Activated CD8-positive, alpha-beta T cell treated with anti-CD3 and anti-CD28 coated beads for 36 hours (primary cell): ENCODE measurements at regions of chr17 and their contacts with region 1.

Region 1: DNA sequence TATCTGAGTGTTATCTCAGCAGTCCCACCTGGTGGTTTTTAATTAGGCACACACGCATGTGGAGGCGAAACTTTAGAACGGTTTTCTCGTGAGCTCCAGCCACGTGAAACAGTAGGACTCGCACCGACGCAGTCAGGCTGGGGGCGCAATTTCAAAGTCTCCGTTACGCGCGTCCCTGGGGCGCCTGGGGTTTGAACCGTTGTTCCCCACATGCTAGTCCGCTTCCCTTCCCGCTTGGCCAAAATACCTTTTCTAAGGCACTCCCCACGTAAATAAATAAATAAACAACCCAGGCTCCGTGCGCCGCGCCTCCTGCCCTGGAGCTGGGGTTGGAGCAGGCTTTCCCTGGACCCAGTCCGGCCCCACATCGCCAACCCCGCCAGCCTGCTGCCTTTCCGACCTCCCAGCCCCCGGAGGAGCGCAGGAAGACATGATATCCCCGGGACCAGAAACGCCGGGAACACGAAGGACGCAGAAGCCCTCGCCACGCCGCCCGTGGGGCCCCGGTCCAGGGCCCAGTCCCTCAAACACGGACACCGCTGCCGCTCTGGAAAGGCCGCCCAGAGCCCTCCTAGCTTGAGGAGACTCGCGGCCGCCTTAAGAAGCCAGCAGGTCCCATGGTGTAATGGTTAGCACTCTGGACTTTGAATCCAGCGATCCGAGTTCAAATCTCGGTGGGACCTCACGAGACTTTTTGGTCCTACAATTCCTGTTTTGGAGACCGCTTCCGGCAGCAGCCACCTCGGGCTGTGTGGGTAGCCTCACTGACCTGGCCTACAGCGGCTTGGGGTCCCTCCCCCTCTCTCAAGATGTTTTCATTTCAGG is 18.2 kb downstream of the GNGT2 start:
- DNase-seq: peak; percentile 92
- ATAC-seq: peak; percentile 34
- H3K4me3 Mint-ChIP-seq: peak overlapping the region; percentile 96
- H3K27ac Mint-ChIP-seq: peak overlapping the region; percentile 99
- H3K4me1 Mint-ChIP-seq: peaks cover 31% of the 10 kb centered on the region
- H3K27me3 Mint-ChIP-seq: no peaks in the 10 kb centered on the region
- CTCF ChIP-seq: peak; percentile 24

Region 2: DNA sequence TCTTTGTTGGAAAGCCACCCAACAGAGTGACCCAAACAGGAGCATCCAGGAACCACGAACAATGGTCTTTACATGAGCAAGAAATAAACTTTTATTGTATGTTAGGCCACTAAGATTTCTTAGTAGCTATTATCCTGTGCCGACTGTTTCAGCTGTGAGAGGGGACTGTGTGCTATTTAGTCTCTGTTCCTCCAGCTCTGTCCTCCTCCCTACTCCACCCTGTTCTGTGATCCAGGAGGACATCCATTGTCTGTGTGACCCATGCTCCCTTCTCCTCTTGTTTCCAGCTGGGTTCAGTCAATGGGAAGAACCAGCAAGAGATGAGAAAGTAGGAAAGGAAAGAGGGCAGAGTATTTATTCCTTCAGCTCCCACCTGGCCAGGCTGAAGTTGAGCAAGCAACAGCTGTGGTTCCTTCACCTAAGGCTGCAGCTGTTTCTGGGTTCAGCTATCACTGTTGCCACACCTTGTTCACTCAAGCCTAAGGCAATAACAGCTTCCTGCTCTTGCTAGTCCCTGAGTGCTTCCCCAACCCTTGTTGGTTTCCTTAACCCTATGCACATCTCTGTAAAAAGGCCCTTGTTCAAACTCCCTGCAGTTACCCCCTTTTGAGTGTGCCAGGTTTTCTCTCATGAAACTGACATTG is 74.4 kb before region 1 on chr17:
- CTCF ChIA-PET with region 1: no interaction called
- POLR2A ChIA-PET with region 1: no interaction called
- intact Hi-C with region 1: no loop called
- DNase-seq: no peak
- ATAC-seq: no peak
- H3K4me3 Mint-ChIP-seq: no peak overlapping the region
- H3K27ac Mint-ChIP-seq: no peak overlapping the region
- H3K4me1 Mint-ChIP-seq: no peaks in the 10 kb centered on the region
- H3K27me3 Mint-ChIP-seq: peaks cover 30% of the 10 kb centered on the region
- CTCF ChIP-seq: no peak

Region 3: DNA sequence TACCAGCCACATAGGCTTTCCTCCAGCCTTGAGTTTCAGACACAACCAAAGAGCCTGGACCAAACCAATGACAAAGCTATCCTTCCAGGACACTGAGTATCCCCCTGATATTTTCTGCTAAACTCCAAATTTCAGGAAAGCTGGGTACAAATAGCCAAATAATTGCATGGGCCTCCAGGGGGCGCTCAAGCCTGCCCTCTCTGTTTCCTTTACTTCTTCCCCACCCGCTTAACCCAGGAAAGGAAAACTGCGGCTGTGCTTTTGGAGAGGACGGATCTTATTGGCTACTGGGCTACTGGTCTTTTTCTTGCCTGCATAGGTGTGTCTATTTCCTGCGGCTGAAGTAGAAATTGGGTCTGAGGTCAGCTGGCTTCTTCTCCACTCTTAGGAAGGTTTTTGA is 11.8 kb before region 1 on chr17:
- CTCF ChIA-PET with region 1: interaction called, 45 read pairs
- POLR2A ChIA-PET with region 1: interaction called, 3 read pairs
- intact Hi-C with region 1: no loop called
- DNase-seq: peak; percentile 82
- ATAC-seq: peak; percentile 37
- H3K4me3 Mint-ChIP-seq: no peak overlapping the region
- H3K27ac Mint-ChIP-seq: no peak overlapping the region
- H3K4me1 Mint-ChIP-seq: peaks cover 4% of the 10 kb centered on the region
- H3K27me3 Mint-ChIP-seq: no peaks in the 10 kb centered on the region
- CTCF ChIP-seq: peak; percentile 99

Region 4: DNA sequence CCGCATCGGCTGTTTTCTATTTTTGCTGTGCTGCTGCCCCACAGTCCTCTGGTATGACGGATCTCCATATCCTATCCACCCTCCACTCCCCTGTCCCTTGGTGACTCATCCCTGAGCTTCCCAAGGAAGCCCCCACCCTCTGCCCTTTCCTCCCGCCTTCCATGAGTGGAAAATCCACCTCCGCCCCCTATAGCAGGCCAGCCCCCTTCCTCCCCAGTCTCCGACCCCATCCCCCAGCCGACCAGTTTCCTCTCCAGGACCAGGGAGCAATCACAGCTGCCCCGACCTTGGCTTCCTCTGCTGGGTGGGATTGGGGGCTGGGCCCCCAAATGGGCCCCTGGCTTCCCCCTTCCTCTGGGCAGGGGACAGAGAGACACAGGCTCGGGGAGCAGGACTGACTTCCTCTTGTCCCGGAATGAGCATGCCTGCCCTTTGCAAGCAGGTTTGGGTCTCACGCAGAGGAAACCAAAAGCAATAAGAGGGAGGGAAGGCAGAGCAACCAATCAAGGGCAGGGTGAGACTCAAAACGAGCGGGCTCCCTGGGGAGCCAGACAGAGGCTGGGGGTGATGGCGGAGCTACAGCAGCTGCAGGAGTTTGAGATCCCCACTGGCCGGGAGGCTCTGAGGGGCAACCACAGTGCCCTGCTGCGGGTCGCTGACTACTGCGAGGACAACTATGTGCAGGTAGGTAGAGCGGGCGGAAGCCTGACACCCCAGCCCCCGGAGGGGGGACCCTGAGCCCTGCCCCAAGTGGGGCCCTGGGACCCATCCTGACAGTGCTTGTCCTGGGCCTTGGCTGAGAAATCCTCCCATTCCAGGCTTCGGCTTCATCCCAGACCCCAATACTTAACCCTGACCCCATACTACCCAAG is 18.3 kb after region 1 on chr17 and contains the starts of genes ABI3 and GNGT2:
- CTCF ChIA-PET with region 1: interaction called, 58 read pairs
- POLR2A ChIA-PET with region 1: interaction called, 52 read pairs
- intact Hi-C with region 1: no loop called
- DNase-seq: peak; percentile 85
- ATAC-seq: peak; percentile 88
- H3K4me3 Mint-ChIP-seq: peak within 1 kb of the TSS; percentile 79
- H3K27ac Mint-ChIP-seq: peak within 1 kb of the TSS; percentile 95
- H3K4me1 Mint-ChIP-seq: peaks cover 56% of the 10 kb centered on the region
- H3K27me3 Mint-ChIP-seq: no peaks in the 10 kb centered on the region
- CTCF ChIP-seq: no peak
- total RNA-seq, gene ABI3: 39.3 to 45.1 TPM
- total RNA-seq, gene GNGT2: 21.7 to 23.9 TPM

Region 5: GRCh38 chr17:49217651-49218413 is 25.7 kb after region 1 on chr17:
- CTCF ChIA-PET with region 1: interaction called, 58 read pairs
- POLR2A ChIA-PET with region 1: interaction called, 52 read pairs
- intact Hi-C with region 1: loop called (anchors 2 kb)
- DNase-seq: peak; percentile 83
- ATAC-seq: peak; percentile 61
- H3K4me3 Mint-ChIP-seq: peak overlapping the region; percentile 65
- H3K27ac Mint-ChIP-seq: peak overlapping the region; percentile 97
- H3K4me1 Mint-ChIP-seq: peaks cover 76% of the 10 kb centered on the region
- H3K27me3 Mint-ChIP-seq: no peaks in the 10 kb centered on the region
- CTCF ChIP-seq: no peak

Region 6: GRCh38 chr17:49223517-49224197 is 31.5 kb after region 1 on chr17:
- CTCF ChIA-PET with region 1: interaction called, 210 read pairs
- POLR2A ChIA-PET with region 1: interaction called, 57 read pairs
- intact Hi-C with region 1: loop called (anchors 2 kb)
- DNase-seq: peak; percentile 85
- ATAC-seq: peak; percentile 26
- H3K4me3 Mint-ChIP-seq: peak overlapping the region; percentile 56
- H3K27ac Mint-ChIP-seq: peak overlapping the region; percentile 10
- H3K4me1 Mint-ChIP-seq: peaks cover 46% of the 10 kb centered on the region
- H3K27me3 Mint-ChIP-seq: peaks cover 5% of the 10 kb centered on the region
- CTCF ChIP-seq: peak; percentile 95

Region 7: DNA sequence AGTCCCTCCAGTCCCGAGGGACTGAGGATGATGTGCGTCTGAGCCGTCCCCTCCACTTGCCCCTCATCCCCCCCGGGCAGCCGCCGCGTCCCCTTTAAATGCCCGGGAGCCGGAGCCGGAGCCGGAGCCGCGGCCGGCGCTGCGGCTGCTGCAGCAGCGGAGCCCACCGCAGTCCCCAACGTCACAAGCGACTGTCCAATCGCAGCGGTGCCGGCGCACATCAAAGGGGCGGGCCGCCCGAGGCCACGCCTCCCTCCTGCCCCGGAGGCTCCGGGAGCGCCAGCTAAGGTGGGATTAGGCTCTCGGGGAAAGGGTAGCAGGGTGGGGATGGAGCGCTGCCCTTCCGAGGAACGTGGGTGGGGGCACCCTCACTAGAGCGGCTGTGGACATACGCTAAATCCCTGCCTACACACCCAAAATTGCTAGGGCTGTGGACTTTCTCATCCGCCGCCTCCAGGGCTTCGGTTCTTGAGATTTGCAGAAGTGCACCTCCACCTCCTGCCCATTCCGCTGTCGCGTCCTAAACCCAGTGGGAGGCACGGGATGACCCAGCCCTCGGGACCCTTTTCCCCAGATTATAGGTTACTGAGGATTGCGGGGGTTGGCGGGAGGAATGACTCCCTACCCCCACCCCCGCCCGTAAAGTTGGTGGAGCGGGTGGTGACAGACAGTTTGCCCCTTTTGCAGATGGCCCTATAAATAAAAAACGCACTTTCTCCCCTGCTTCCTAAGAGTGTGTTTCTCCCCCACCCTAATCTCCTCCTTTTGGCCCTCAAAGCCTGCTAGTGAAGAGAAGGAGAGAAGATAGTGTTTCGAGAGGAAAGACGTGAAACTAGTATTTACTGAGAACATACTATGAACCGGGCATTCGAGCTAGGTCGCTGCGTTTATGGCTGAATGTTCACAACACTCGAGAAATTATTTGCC is 38.8 kb after region 1 on chr17 and contains the start of gene PHOSPHO1:
- CTCF ChIA-PET with region 1: interaction called, 210 read pairs
- POLR2A ChIA-PET with region 1: interaction called, 57 read pairs
- intact Hi-C with region 1: no loop called
- DNase-seq: peak; percentile 90
- ATAC-seq: peak; percentile 88
- H3K4me3 Mint-ChIP-seq: peak within 1 kb of the TSS; percentile 66
- H3K27ac Mint-ChIP-seq: no peak within 1 kb of the TSS
- H3K4me1 Mint-ChIP-seq: peaks cover 3% of the 10 kb centered on the region
- H3K27me3 Mint-ChIP-seq: peaks cover 19% of the 10 kb centered on the region
- CTCF ChIP-seq: no peak
- total RNA-seq, gene PHOSPHO1: not detected

Region 8: DNA sequence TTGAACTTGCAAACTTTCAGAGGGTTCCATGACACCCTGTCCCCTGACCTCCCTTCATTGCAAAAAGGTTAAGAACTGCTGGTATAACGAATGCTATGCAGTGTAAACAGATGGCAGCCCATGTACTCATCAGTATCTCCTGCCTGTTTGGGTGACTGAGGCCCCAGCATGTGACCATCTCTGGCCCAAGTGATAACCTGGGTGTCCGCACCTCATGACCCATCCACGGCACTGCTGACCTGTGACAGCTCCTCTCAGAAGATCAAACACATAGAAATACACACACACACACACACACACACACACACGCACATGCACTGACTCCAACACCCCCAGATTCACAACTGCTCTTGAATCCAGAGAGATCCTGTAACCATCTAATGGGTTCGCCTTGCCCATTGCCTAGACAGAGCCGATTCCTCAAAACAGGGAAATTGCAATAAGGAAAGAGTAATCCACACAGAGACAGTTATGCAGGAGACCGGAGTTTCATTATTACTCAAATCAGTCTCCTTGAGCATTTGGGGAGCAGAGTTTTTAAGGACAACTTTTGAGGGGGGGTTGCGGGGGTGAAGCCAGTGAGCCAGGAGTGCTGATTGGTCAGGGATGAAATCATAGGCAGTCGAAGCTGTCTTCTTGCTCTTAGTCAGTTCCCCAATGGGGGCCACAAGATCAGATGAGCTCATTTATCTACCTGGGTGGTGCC is 49.7 kb after region 1 on chr17:
- CTCF ChIA-PET with region 1: no interaction called
- POLR2A ChIA-PET with region 1: no interaction called
- intact Hi-C with region 1: no loop called
- DNase-seq: no peak
- ATAC-seq: no peak
- H3K4me3 Mint-ChIP-seq: no peak overlapping the region
- H3K27ac Mint-ChIP-seq: no peak overlapping the region
- H3K4me1 Mint-ChIP-seq: no peaks in the 10 kb centered on the region
- H3K27me3 Mint-ChIP-seq: peaks cover 2% of the 10 kb centered on the region
- CTCF ChIP-seq: no peak